ENCODE measurements at regions of chr17 and their contacts with region 1.

Region 1: DNA sequence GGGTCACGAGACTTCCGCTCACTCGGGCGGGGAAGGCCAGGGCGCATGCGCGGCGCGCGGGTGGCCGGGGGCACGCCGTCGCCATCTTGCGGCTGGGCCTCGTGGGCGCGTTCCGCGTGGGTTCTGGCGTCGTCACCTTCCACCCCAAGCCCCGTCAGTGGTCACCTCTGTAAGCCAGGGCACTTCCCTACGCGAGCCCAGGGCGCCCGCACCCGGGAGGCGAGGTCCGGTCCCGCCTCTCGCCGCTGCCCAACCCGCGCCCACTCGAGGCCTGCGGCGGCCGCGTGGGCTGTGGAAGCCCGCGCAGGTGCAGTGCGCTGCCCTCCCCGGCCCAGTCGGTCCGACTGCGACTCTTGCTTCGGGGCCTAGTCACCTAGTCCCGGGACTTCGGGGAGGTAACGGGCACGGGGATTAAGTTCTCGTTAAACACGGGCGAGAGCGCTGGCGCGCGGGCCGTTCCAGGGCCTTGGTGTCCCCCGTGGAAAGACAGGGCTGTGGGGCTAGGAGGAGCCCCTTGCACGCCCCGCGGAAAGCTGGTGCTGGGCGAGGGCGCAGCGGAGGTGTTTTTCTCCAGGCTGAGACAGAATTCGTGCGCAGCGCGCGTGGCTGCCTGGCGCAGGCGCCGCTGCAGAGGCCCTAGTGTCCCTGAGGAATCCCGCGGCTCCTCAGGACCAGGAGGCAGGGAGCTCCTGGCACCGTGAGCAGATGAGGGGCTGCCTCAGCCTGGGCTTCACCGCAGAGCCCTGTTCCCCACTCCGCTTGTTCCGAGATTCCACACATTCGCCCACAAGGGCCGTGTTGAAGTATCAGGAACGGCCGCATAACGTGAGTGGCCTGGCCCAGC is 472 bp upstream of the ARHGDIA start:
- DNase-seq: peak; percentile 95 to 98 (median 95)
- H3K4me3 ChIP-seq: peak overlapping the region; percentile 90
- H3K4me3 Mint-ChIP-seq: peak overlapping the region; percentile 81 to 94 (median 88)
- H3K27ac ChIP-seq: peak overlapping the region; percentile 98
- H3K27ac Mint-ChIP-seq: peak overlapping the region; percentile 90 to 98 (median 94)
- H3K4me1 ChIP-seq: peaks cover 42% of the 10 kb centered on the region
- H3K4me1 Mint-ChIP-seq: peaks cover 23 to 50% (median 25%) of the 10 kb centered on the region in 3 donors
- H3K27me3 ChIP-seq: no peaks in the 10 kb centered on the region
- H3K27me3 Mint-ChIP-seq: peaks cover 0 to 3% of the 10 kb centered on the region in 2 donors

Region 2: GRCh38 chr17:81860756-81861518 is 10.7 kb before region 1 on chr17:
- CTCF ChIA-PET with region 1: interaction called, 5 read pairs
- POLR2A ChIA-PET with region 1: interaction called, 32 read pairs
- DNase-seq: peak; percentile 98 to 100 (median 99)
- H3K4me3 ChIP-seq: peak overlapping the region; percentile 85
- H3K4me3 Mint-ChIP-seq: peak overlapping the region; percentile 86 to 94 (median 91)
- H3K27ac ChIP-seq: peak overlapping the region; percentile 97
- H3K27ac Mint-ChIP-seq: peak overlapping the region; percentile 95 to 99 (median 98)
- H3K4me1 ChIP-seq: peaks cover 31% of the 10 kb centered on the region
- H3K4me1 Mint-ChIP-seq: peaks cover 25 to 63% (median 34%) of the 10 kb centered on the region in 3 donors
- H3K27me3 ChIP-seq: no peaks in the 10 kb centered on the region
- H3K27me3 Mint-ChIP-seq: peaks cover 0 to 8% of the 10 kb centered on the region in 2 donors

Region 3: GRCh38 chr17:81890447-81891299 is 19.1 kb after region 1 on chr17:
- CTCF ChIA-PET with region 1: interaction called, 3 read pairs
- POLR2A ChIA-PET with region 1: interaction called, 12 read pairs
- DNase-seq: no peak
- H3K4me3 ChIP-seq: peak overlapping the region; percentile 61
- H3K4me3 Mint-ChIP-seq: peak overlapping the region; percentile 84 to 93 (median 88)
- H3K27ac ChIP-seq: peak overlapping the region; percentile 73
- H3K27ac Mint-ChIP-seq: peak overlapping the region; percentile 89 to 98 (median 94)
- H3K4me1 ChIP-seq: peaks cover 22% of the 10 kb centered on the region
- H3K4me1 Mint-ChIP-seq: peaks cover 19 to 35% (median 20%) of the 10 kb centered on the region in 3 donors
- H3K27me3 ChIP-seq: no peaks in the 10 kb centered on the region
- H3K27me3 Mint-ChIP-seq: peaks cover 0 to 1% of the 10 kb centered on the region in 2 donors

Measured in CD8-positive, alpha-beta memory T cell (primary cell).